ENCODE measurements at regions of chr11 and their contacts with region 1.

Region 1: GRCh38 chr11:96389720-96390487 is at the starts of genes CCDC82 and JRKL:
- DNase-seq: peak; percentile 99
- H3K4me3 Mint-ChIP-seq: peak within 1 kb of the TSS; percentile 86
- H3K27ac Mint-ChIP-seq: peak within 1 kb of the TSS; percentile 85
- H3K4me1 Mint-ChIP-seq: peaks cover 67% of the 10 kb centered on the region
- H3K27me3 Mint-ChIP-seq: no peaks in the 10 kb centered on the region
- total RNA-seq, gene CCDC82: 30.6 to 35.3 TPM
- total RNA-seq, gene JRKL: 13.7 to 15.4 TPM

Region 2: GRCh38 chr11:95790123-95790932 is 599.6 kb before region 1 on chr11 and contains the start of gene CEP57:
- CTCF ChIA-PET with region 1: interaction called, 9 read pairs
- POLR2A ChIA-PET with region 1: interaction called, 23 read pairs
- intact Hi-C with region 1: loop called (anchors 1 kb)
- DNase-seq: peak; percentile 97
- H3K4me3 Mint-ChIP-seq: peak within 1 kb of the TSS; percentile 95
- H3K27ac Mint-ChIP-seq: peak within 1 kb of the TSS; percentile 100
- H3K4me1 Mint-ChIP-seq: peaks cover 55% of the 10 kb centered on the region
- H3K27me3 Mint-ChIP-seq: no peaks in the 10 kb centered on the region
- total RNA-seq, gene CEP57: 115 to 117 TPM

Region 3: GRCh38 chr11:95849087-95849825 is 540.6 kb before region 1 on chr11:
- CTCF ChIA-PET with region 1: interaction called, 32 read pairs
- POLR2A ChIA-PET with region 1: no interaction called
- intact Hi-C with region 1: no loop called
- DNase-seq: peak; percentile 39
- H3K4me3 Mint-ChIP-seq: no peak overlapping the region
- H3K27ac Mint-ChIP-seq: no peak overlapping the region
- H3K4me1 Mint-ChIP-seq: no peaks in the 10 kb centered on the region
- H3K27me3 Mint-ChIP-seq: no peaks in the 10 kb centered on the region

Region 4: DNA sequence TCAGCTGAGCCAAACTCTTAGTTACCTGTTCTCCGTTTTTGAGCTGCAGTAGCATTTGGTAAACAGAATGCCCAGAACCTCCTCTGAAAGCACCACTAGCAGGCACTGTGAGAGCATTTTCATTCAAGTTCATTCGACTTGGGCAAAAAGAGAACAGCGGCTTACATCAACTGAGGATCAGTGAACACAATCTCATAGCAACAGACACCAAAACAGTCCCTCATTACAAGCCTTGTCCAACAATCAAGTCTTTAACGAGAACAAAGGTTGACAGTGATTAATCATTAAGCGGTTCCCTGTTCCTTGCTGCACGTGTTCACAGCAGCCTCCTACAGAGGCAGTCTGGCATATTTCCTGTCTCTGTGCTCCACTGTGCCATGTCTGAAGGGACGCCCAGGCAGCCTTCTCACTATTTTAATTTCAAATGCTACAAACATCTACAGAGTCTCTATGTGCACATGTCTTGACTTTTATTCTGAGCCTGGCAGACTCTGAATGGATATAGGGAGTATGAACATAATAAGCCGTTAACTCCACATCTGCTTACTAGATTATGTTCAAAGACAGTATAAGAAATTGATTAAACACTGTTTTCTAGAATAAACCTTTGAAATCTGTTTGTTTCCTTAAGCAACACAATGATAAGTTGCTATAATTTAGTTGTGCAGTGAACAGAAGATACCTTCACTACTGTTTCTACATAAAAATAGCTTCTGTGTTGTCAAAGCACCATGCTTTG is 377.6 kb before region 1 on chr11:
- CTCF ChIA-PET with region 1: interaction called, 4 read pairs
- POLR2A ChIA-PET with region 1: interaction called, 4 read pairs
- intact Hi-C with region 1: loop called (anchors 1 kb)
- DNase-seq: peak; percentile 59
- H3K4me3 Mint-ChIP-seq: peak overlapping the region; percentile 32
- H3K27ac Mint-ChIP-seq: peak overlapping the region; percentile 75
- H3K4me1 Mint-ChIP-seq: peaks cover 55% of the 10 kb centered on the region
- H3K27me3 Mint-ChIP-seq: no peaks in the 10 kb centered on the region

Region 5: DNA sequence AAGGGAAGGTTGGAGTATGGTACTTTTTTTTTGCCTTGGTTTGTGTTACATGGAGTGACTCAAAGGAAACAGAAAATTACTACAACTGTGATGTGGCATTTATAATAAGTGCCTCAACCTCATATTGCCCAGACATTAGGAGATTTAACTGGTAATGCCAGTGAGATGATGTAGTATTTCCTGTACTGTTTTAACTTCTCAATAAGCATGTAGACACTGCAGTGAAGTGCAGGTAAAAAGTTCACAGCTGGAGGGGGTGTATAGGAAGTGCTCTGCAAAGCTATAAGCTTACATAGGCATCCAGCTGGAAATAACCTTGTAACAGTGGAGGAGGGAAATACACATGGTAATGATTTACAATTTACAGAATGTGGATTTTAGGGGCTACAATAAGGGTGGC is 327.8 kb before region 1 on chr11:
- CTCF ChIA-PET with region 1: no interaction called
- POLR2A ChIA-PET with region 1: interaction called, 8 read pairs
- intact Hi-C with region 1: loop called (anchors 2 kb)
- DNase-seq: peak; percentile 54
- H3K4me3 Mint-ChIP-seq: peak overlapping the region; percentile 31
- H3K27ac Mint-ChIP-seq: peak overlapping the region; percentile 88
- H3K4me1 Mint-ChIP-seq: peaks cover 75% of the 10 kb centered on the region
- H3K27me3 Mint-ChIP-seq: no peaks in the 10 kb centered on the region

Region 6: GRCh38 chr11:96207459-96208449 is 182.2 kb before region 1 on chr11:
- CTCF ChIA-PET with region 1: no interaction called
- POLR2A ChIA-PET with region 1: interaction called, 7 read pairs
- intact Hi-C with region 1: loop called (anchors 5 kb)
- DNase-seq: peak; percentile 44
- H3K4me3 Mint-ChIP-seq: peak overlapping the region; percentile 55
- H3K27ac Mint-ChIP-seq: peak overlapping the region; percentile 91
- H3K4me1 Mint-ChIP-seq: peaks cover 85% of the 10 kb centered on the region
- H3K27me3 Mint-ChIP-seq: no peaks in the 10 kb centered on the region

Region 7: DNA sequence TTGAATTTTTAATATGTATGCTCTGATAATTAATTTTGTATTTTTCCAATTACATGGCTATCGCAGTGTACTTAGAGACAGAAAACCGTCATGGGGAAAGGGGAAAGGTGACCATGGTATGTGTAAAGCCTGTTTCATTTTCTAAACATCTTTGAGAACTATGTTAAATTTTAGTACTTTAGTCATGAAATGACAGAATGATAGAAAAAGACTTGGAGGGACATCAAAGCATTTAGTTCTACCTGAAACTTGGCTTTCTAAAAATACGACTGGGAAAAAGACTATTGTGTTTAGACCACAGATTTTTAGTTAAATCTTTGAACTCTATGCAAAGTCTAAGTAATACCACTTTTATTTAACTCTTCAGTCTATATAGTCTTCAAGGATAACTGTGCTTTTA is 101.0 kb before region 1 on chr11:
- CTCF ChIA-PET with region 1: no interaction called
- POLR2A ChIA-PET with region 1: no interaction called
- intact Hi-C with region 1: no loop called
- DNase-seq: no peak
- H3K4me3 Mint-ChIP-seq: no peak overlapping the region
- H3K27ac Mint-ChIP-seq: no peak overlapping the region
- H3K4me1 Mint-ChIP-seq: peaks cover 79% of the 10 kb centered on the region
- H3K27me3 Mint-ChIP-seq: no peaks in the 10 kb centered on the region

Region 8: DNA sequence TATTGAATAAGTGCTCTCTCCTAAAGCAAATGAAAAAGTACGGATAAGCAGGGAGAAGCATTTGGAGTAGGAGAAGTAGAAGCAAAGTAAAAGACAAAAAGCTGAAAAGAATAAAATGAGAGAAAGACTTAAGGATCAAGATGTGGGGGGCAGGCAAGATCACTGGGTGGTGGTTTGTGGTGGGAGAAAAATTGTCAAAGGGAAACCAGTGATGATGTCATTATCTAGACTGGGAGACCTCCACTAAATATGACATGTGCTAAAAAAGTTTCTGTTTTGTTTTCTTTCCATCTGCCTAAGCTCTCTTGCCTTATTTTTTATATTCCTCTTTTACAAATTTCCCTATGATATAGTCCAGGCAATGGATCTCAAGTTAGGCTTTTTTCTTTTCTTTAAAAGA is 32.1 kb before region 1 on chr11:
- CTCF ChIA-PET with region 1: interaction called, 3 read pairs
- POLR2A ChIA-PET with region 1: no interaction called
- intact Hi-C with region 1: loop called (anchors 2 kb)
- DNase-seq: no peak
- H3K4me3 Mint-ChIP-seq: no peak overlapping the region
- H3K27ac Mint-ChIP-seq: no peak overlapping the region
- H3K4me1 Mint-ChIP-seq: peaks cover 21% of the 10 kb centered on the region
- H3K27me3 Mint-ChIP-seq: no peaks in the 10 kb centered on the region